Right ventricle myocardium inferior (tissue), 1 donor: ENCODE measurements at regions of chr5 and their contacts with region 1.

Region 1: GRCh38 chr5:81506900-81507588 is 113.1 kb upstream of the ACOT12 start:
- DNase-seq: no peak
- ATAC-seq: peak; percentile 99

Region 2: DNA sequence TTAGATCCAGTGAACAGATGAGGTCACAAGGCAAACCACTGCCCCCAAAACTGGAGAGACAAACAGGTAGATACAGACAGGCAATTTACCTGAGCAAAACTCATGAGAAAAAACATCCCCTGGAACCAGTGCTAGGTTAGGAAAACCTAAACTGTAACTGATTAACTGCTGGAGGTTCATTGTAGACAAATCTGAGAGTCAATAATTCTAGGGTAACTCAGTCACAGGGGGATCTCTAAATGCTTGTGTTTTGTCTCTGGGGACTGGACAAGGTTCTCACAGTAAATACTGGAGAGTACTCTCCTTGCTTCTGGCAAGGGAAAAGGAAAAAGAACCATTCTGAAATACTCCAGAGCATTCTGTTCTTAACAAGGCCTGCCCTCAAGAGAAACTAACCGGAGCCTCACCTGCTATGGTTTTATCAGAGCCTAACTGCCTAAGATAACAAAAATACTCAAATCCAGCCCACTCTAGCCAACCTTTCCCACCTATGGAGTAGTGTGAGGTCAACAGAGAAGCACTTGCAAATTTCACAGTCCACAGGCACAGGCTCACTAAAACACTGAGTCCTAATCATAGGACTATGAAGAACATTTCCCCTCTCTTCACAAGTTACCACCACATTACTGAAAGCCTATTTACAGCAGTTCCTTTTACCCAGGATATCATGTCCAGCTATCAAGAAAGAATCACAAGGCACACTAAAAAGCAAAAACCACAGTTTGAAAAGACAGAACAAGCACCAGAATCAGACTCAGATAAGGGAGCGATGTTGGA is 26.8 kb after region 1 on chr5:
- intact Hi-C with region 1: no loop called
- DNase-seq: no peak
- ATAC-seq: no peak

Region 3: DNA sequence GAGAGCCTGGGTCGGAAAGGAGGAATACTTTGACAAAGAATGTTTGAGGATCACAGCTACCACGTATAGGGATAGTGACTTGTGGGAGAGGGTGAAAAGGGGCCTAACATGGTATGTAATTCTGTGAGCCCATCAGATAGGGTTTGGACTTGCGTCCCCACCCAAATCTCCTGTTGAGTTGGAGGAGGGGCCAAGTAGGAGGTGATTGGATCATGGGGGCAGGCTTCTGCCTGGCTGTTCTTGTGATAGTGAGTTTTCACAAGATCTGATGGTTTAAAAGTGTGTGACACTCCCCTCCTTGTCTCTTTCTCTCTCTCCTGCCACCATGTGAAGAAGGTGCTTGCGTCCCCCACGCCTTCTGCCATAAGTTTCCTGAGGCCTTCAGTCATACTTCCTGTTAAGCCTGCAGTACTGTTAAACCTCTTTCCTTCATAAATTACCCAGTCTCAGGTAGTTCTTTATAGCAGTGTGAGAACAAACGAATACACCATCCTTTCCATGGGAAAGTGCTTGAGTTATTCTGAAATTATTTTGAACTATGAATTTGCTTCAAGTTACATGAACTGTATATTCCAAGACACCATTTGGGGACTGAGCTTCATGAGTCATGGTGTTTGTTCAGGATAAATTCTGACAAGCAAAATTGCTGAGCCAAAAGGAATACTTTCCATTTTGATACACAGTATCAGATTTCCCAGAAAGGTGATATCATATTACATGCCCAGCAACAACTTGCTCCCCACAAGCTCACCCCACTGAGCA is 312.7 kb after region 1 on chr5:
- intact Hi-C with region 1: no loop called
- DNase-seq: no peak
- ATAC-seq: no peak

Region 4: DNA sequence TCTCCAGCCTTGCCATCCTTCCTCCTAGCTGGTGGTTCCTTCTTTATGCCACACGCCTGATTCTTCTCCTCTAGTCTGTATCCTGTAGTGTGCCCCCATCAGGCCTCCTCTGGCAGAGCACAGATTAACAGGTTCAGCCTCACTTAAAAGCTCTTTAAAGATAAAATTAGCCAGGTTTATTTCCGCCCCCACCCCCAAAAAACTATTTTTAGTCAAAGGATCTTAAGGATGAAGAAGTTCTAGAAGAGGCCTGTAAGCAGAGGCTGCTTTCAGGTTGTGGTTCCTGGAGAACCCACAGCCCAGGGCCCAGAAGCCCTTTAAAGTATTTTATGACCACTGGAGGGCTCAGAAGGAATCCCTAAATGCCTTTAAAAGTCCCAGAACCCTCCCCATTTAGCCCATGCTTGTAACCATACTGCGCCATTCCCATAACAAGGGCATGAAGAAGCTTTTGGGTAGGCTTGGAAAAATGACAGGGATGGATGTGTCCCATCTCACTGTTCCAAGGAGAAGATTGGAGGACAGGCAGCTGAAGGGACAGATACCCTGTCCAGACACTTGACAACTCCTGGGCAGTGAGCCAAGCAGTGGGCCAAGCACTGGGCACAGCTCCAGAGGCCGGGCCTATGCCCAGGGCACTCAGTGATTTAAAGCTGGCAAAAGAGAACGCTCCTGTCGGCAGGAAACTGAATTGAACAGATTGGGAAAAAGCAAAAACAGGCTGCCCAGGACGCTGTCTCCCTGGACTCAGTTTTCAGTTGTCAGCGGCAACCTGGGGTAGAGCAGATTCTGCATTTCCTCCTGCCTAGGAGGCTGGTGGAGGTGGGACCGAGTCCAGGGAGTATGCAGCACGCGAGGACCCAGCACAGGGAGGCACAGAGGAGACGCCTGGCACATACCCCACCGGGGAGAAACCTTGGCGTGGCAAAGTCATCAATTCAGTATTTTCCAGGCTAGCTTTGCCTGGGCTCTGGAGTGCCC is 350.2 kb after region 1 on chr5:
- intact Hi-C with region 1: loop called (anchors 5 kb)
- DNase-seq: peak; percentile 85
- ATAC-seq: peak; percentile 92

Region 5: DNA sequence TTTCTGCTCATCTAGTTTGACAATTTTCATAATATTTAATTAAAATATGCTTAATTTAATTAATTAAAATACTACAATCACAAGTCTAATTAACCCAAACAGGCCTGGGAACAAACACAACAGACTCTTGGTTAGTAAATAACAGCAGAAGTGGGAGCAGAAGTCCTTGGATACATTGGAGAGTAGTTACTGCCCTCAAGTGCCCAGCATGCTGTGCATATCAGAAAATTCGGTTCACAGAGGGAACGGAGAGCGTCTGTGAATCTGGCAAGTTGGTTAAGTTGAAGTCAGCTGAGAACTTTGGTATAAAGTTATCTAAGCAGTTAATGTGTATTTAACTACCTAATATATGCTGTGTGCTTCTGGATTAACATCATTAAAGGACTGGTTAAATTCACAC is 377.8 kb after region 1 on chr5:
- intact Hi-C with region 1: loop called (anchors 10 kb)
- DNase-seq: no peak
- ATAC-seq: peak; percentile 72

Region 6: GRCh38 chr5:81971712-81972495 is 464.9 kb after region 1 on chr5 and contains the start of gene ATG10:
- intact Hi-C with region 1: loop called (anchors 5 kb)
- DNase-seq: peak; percentile 95
- ATAC-seq: peak; percentile 100
- total RNA-seq, gene ATG10: 3.9 TPM